ENCODE measurements at regions of chr15 and their contacts with region 1.

Region 1: GRCh38 chr15:89206908-89207331 is 14.5 kb downstream of the RLBP1 start:
- DNase-seq: peak; percentile 73
- H3K4me3 Mint-ChIP-seq: no peak overlapping the region
- H3K27ac Mint-ChIP-seq: no peak overlapping the region
- H3K4me1 Mint-ChIP-seq: peaks cover 37% of the 10 kb centered on the region
- H3K27me3 Mint-ChIP-seq: peaks cover 1% of the 10 kb centered on the region

Region 2: DNA sequence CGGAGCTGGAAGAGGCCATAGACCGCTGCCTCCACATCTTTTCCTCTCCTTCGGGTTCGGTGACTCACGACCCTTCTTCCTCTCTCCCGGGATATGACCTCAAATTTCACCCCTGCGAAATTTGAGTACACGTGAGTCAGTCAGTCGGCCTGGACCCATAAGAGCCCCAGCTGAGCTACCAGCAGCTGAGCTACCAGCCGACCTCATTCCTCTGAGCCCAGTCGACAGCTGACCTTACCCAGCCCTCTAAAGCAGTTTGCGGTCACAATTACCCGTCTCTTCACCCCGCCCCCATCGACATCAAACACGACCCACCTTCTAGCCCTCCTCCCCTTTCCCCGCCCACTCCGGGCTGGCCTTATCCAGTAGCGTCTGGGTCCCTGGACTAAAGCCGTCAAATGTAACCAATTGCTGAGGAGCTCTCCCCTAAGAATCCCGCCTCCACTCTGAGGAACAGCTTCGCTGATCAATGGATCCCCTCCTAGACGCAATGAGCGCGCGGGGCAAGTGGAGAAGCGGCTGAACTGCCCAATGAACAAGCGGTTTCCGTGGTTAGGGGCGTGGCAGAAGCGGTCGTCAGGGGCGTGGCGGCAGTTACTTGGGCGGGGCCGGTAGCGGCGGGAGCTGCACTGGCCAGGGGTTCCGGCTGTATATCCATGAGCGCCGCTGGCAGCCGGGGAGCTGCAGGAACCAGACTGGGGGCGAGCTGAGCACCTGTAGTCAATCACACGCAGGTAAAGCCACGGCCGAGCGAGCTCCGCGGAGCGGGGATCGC is 118.9 kb before region 1 on chr15 and contains the start of gene ABHD2:
- CTCF ChIA-PET with region 1: interaction called, 22 read pairs
- POLR2A ChIA-PET with region 1: interaction called, 4 read pairs
- DNase-seq: peak; percentile 99
- H3K4me3 Mint-ChIP-seq: no peak within 1 kb of the TSS
- H3K27ac Mint-ChIP-seq: peak within 1 kb of the TSS; percentile 40
- H3K4me1 Mint-ChIP-seq: peaks cover 30% of the 10 kb centered on the region
- H3K27me3 Mint-ChIP-seq: no peaks in the 10 kb centered on the region
- total RNA-seq, gene ABHD2: 62.4 to 63.5 TPM

Region 3: GRCh38 chr15:89177633-89178306 is 29.1 kb before region 1 on chr15:
- CTCF ChIA-PET with region 1: interaction called, 19 read pairs
- POLR2A ChIA-PET with region 1: no interaction called
- DNase-seq: peak; percentile 72
- H3K4me3 Mint-ChIP-seq: no peak overlapping the region
- H3K27ac Mint-ChIP-seq: no peak overlapping the region
- H3K4me1 Mint-ChIP-seq: peaks cover 17% of the 10 kb centered on the region
- H3K27me3 Mint-ChIP-seq: no peaks in the 10 kb centered on the region

Region 4: DNA sequence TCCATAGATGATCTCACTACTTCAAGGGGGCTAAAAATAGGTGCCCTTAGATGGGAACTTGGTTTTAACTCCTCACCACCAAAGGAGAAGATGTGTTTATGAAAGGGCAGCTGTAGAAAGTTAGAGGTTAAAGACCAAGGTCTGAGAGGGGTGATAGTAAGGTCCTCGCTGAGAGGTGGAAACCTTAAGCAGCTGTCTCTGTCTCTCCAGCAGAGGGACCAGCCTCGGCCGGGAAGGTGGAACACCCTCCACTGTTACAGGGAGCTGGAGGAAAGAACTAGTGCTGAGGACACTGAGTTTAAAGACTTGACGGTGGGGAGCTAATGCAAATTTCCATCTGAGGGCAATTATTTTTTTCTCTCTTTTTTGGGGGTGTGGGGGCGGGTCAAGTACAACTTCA is 23.4 kb after region 1 on chr15:
- CTCF ChIA-PET with region 1: interaction called, 16 read pairs
- POLR2A ChIA-PET with region 1: interaction called, 3 read pairs
- DNase-seq: no peak
- H3K4me3 Mint-ChIP-seq: no peak overlapping the region
- H3K27ac Mint-ChIP-seq: no peak overlapping the region
- H3K4me1 Mint-ChIP-seq: peaks cover 13% of the 10 kb centered on the region
- H3K27me3 Mint-ChIP-seq: peaks cover 22% of the 10 kb centered on the region

Region 5: GRCh38 chr15:89293012-89293411 is 86.1 kb after region 1 on chr15:
- CTCF ChIA-PET with region 1: interaction called, 11 read pairs
- POLR2A ChIA-PET with region 1: no interaction called
- DNase-seq: no peak
- H3K4me3 Mint-ChIP-seq: no peak overlapping the region
- H3K27ac Mint-ChIP-seq: no peak overlapping the region
- H3K4me1 Mint-ChIP-seq: peaks cover 5% of the 10 kb centered on the region
- H3K27me3 Mint-ChIP-seq: no peaks in the 10 kb centered on the region

Region 6: DNA sequence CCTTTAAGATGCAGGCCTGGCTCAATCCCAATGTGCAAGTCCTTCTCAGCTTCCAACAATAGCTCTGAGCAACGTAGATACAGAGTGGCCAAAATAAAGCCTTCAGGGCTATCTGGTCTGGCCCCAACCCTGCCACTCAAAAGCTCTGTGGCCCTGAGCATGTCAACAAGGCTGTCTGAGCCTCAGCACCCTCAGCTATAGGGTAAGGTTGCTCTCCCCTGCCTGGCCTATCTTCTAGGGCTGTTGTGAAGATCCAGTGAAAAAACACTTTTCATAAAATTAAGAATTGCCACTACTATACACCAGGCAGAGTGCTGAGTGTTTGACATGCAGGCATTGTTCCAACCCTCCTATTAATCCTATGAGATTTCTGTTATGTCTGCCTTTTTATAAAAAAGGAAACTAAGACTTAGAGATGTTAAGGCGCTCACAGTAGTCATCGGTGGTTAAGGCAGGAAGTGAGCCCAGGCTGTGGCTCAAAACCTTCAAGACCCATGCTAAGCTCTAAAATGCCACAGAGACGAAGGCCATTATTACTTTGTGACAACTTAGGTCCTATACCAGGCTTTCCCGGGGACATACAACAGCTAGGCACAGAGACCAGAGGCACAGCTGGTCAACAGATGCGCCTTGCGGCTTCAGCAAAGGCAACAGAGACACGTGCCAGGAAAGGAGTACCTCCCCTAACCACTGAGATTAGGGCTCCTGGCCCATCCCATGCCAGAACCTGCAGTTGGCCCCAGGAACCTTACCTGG is 122.6 kb after region 1 on chr15:
- CTCF ChIA-PET with region 1: interaction called, 17 read pairs
- POLR2A ChIA-PET with region 1: interaction called, 3 read pairs
- DNase-seq: peak; percentile 72
- H3K4me3 Mint-ChIP-seq: peak overlapping the region; percentile 46
- H3K27ac Mint-ChIP-seq: peak overlapping the region; percentile 85
- H3K4me1 Mint-ChIP-seq: peaks cover 51% of the 10 kb centered on the region
- H3K27me3 Mint-ChIP-seq: no peaks in the 10 kb centered on the region

Region 7: GRCh38 chr15:89611317-89611716 is 404.4 kb after region 1 on chr15:
- CTCF ChIA-PET with region 1: no interaction called
- POLR2A ChIA-PET with region 1: no interaction called
- DNase-seq: no peak
- H3K4me3 Mint-ChIP-seq: no peak overlapping the region
- H3K27ac Mint-ChIP-seq: no peak overlapping the region
- H3K4me1 Mint-ChIP-seq: peaks cover 5% of the 10 kb centered on the region
- H3K27me3 Mint-ChIP-seq: no peaks in the 10 kb centered on the region